Natural killer cell (primary cell): ENCODE measurements at regions of chr9 and their contacts with region 1.

Region 1: GRCh38 chr9:89405826-89406225 is 87.5 kb downstream of the SECISBP2 start:
- DNase-seq: no peak
- ATAC-seq: peak; percentile 13 to 48 (median 31)
- H3K4me3 ChIP-seq: no peak overlapping the region
- H3K4me3 Mint-ChIP-seq: peak overlapping the region; percentile 71
- H3K27ac ChIP-seq: peak overlapping the region; percentile 32
- H3K27ac Mint-ChIP-seq: peak overlapping the region; percentile 90 to 91
- H3K4me1 ChIP-seq: peaks cover 76% of the 10 kb centered on the region
- H3K4me1 Mint-ChIP-seq: peaks cover 74 to 79% of the 10 kb centered on the region in 2 donors
- H3K27me3 ChIP-seq: no peaks in the 10 kb centered on the region
- H3K27me3 Mint-ChIP-seq: no peaks in the 10 kb centered on the region
- CTCF ChIP-seq: no peak

Region 2: GRCh38 chr9:89254772-89255123 is 151.1 kb before region 1 on chr9:
- intact Hi-C with region 1: no loop called
- DNase-seq: no peak
- ATAC-seq: no peak
- H3K4me3 ChIP-seq: no peak overlapping the region
- H3K4me3 Mint-ChIP-seq: no peak overlapping the region
- H3K27ac ChIP-seq: no peak overlapping the region
- H3K27ac Mint-ChIP-seq: no peak overlapping the region
- H3K4me1 ChIP-seq: no peaks in the 10 kb centered on the region
- H3K4me1 Mint-ChIP-seq: no peaks in the 10 kb centered on the region
- H3K27me3 ChIP-seq: no peaks in the 10 kb centered on the region
- H3K27me3 Mint-ChIP-seq: no peaks in the 10 kb centered on the region
- CTCF ChIP-seq: no peak

Region 3: GRCh38 chr9:89418882-89419640 is 13.2 kb after region 1 on chr9:
- intact Hi-C with region 1: loop called (anchors 1 kb)
- DNase-seq: peak; percentile 58 to 83
- ATAC-seq: peak; percentile 68 to 90 (median 79)
- H3K4me3 ChIP-seq: no peak overlapping the region
- H3K4me3 Mint-ChIP-seq: peak overlapping the region; percentile 87
- H3K27ac ChIP-seq: peak overlapping the region; percentile 75
- H3K27ac Mint-ChIP-seq: peak overlapping the region; percentile 84 to 92
- H3K4me1 ChIP-seq: peaks cover 75% of the 10 kb centered on the region
- H3K4me1 Mint-ChIP-seq: peaks cover 74% of the 10 kb centered on the region in 2 donors
- H3K27me3 ChIP-seq: no peaks in the 10 kb centered on the region
- H3K27me3 Mint-ChIP-seq: no peaks in the 10 kb centered on the region
- CTCF ChIP-seq: no peak

Region 4: GRCh38 chr9:89442981-89443814 is 37.4 kb after region 1 on chr9:
- intact Hi-C with region 1: loop called (anchors 5 kb)
- DNase-seq: no peak
- ATAC-seq: no peak
- H3K4me3 ChIP-seq: no peak overlapping the region
- H3K4me3 Mint-ChIP-seq: peak overlapping the region; percentile 92
- H3K27ac ChIP-seq: peak overlapping the region; percentile 37
- H3K27ac Mint-ChIP-seq: peak overlapping the region; percentile 93 to 97
- H3K4me1 ChIP-seq: peaks cover 95% of the 10 kb centered on the region
- H3K4me1 Mint-ChIP-seq: peaks cover 63 to 86% of the 10 kb centered on the region in 2 donors
- H3K27me3 ChIP-seq: no peaks in the 10 kb centered on the region
- H3K27me3 Mint-ChIP-seq: no peaks in the 10 kb centered on the region
- CTCF ChIP-seq: no peak

Region 5: DNA sequence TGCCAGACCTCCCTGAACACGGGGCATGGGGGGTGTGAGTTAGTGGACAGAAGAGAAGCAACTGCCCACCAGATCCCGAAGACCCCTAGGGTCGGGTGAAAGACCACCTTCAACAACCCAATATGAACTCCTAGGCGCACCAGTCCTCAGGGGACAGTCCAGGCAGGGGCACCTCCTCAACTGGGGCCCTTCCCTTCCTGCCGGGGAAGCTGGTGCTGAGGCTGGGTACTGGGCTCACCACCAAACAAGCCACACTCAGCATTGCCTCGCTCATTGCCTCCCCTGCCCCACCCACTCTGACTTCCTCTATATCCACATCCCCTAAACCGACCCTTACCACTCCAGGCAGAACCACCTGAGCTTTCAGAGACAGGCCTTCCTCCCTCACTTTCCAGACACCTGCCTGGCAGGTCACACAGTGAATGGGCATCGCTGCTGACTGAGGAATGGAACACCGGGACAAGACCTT is 49.6 kb after region 1 on chr9:
- intact Hi-C with region 1: no loop called
- DNase-seq: peak in 1 of 2 donors; percentile 67
- ATAC-seq: peak; percentile 52 to 58 (median 55)
- H3K4me3 ChIP-seq: no peak overlapping the region
- H3K4me3 Mint-ChIP-seq: peak overlapping the region; percentile 86
- H3K27ac ChIP-seq: peak overlapping the region; percentile 46
- H3K27ac Mint-ChIP-seq: peak overlapping the region; percentile 87 to 88
- H3K4me1 ChIP-seq: peaks cover 72% of the 10 kb centered on the region
- H3K4me1 Mint-ChIP-seq: peaks cover 70 to 82% of the 10 kb centered on the region in 2 donors
- H3K27me3 ChIP-seq: no peaks in the 10 kb centered on the region
- H3K27me3 Mint-ChIP-seq: no peaks in the 10 kb centered on the region
- CTCF ChIP-seq: no peak

Region 6: GRCh38 chr9:89515416-89515815 is 109.6 kb after region 1 on chr9:
- intact Hi-C with region 1: no loop called
- DNase-seq: no peak
- ATAC-seq: no peak
- H3K4me3 ChIP-seq: no peak overlapping the region
- H3K4me3 Mint-ChIP-seq: no peak overlapping the region
- H3K27ac ChIP-seq: no peak overlapping the region
- H3K27ac Mint-ChIP-seq: no peak overlapping the region
- H3K4me1 ChIP-seq: peaks cover 41% of the 10 kb centered on the region
- H3K4me1 Mint-ChIP-seq: peaks cover 33 to 50% of the 10 kb centered on the region in 2 donors
- H3K27me3 ChIP-seq: no peaks in the 10 kb centered on the region
- H3K27me3 Mint-ChIP-seq: no peaks in the 10 kb centered on the region
- CTCF ChIP-seq: no peak

Region 7: DNA sequence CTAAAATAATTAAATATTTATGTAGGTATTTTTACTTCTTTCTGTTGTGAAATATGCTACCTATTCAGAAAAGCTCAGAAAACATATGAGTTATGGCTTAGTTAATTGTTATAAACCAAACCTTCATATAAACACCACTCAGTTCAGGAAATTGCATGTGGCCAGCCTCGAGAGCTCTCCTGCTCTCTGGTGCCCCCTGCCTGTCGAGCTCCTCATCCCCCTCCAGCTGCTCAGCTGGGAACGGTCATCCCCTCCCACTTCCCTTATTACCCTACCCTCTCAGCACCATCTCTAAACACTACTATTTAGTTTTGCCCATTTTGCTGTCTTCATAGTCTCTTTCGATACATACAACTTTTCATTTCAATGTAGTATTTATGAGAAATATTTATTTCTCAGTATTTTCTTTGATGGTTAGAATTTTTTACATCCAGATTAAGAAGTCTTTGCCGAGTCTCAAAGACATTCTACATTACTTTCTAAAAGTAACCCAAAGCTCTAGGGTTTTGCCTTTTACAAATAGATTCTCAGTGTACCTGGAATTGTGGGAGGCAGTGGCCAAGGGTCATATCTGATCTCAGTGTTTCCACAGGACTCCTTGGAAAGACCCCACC is 143.3 kb after region 1 on chr9:
- intact Hi-C with region 1: loop called (anchors 2 kb)
- DNase-seq: peak; percentile 81 to 93
- ATAC-seq: peak; percentile 96 to 100 (median 100)
- H3K4me3 ChIP-seq: no peak overlapping the region
- H3K4me3 Mint-ChIP-seq: no peak overlapping the region
- H3K27ac ChIP-seq: no peak overlapping the region
- H3K27ac Mint-ChIP-seq: peak overlapping the region; percentile 8 to 70
- H3K4me1 ChIP-seq: peaks cover 11% of the 10 kb centered on the region
- H3K4me1 Mint-ChIP-seq: peaks cover 0 to 13% of the 10 kb centered on the region in 2 donors
- H3K27me3 ChIP-seq: no peaks in the 10 kb centered on the region
- H3K27me3 Mint-ChIP-seq: no peaks in the 10 kb centered on the region
- CTCF ChIP-seq: peak; percentile 97